ENCODE measurements at regions of chr11 and their contacts with region 1.

Region 1: DNA sequence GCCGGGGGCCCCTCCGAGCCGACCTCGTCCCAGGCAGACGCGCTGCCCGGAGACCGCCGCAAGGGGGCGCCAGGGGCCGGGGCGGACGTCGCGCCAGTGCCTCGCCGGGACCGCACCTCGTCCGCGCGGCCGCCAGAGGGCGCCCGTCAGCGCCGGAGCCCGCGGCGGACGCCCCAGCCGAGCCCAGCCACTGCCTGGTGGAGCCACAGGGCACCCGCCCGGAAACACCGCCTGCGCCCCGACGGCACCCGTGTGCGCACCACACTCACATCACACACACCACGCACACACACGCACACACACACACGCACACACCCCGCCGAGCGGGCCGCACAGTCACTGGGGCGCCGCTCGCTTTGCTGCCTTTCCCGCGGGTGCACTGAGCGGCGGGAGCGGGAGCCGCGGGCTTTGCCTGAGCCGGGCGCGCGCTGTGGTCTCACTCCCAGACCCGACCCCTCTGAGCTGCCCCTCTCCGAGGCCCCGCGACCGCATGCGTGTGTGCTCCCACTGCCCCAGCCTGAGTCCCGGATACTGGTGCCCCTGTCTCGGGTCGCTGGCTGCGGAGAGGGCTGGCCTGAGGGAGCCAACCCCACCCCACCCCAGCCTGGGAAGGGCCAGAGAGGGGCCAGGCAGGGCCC is 449.3 kb downstream of the OPCML start:
- DNase-seq: peak; percentile 84
- ATAC-seq: peak; percentile 97

Region 2: GRCh38 chr11:133156986-133157745 is 74.2 kb after region 1 on chr11:
- intact Hi-C with region 1: loop called (anchors 10 kb)
- DNase-seq: peak; percentile 50
- ATAC-seq: peak; percentile 73

Region 3: GRCh38 chr11:133834682-133835592 is 752.0 kb after region 1 on chr11:
- intact Hi-C with region 1: loop called (anchors 10 kb)
- DNase-seq: no peak
- ATAC-seq: peak; percentile 83